Activated CD4-positive, alpha-beta T cell treated with anti-CD3 and anti-CD28 coated beads for 36 hours (primary cell): ENCODE measurements at regions of chr9 and their contacts with region 1.

Region 1: DNA sequence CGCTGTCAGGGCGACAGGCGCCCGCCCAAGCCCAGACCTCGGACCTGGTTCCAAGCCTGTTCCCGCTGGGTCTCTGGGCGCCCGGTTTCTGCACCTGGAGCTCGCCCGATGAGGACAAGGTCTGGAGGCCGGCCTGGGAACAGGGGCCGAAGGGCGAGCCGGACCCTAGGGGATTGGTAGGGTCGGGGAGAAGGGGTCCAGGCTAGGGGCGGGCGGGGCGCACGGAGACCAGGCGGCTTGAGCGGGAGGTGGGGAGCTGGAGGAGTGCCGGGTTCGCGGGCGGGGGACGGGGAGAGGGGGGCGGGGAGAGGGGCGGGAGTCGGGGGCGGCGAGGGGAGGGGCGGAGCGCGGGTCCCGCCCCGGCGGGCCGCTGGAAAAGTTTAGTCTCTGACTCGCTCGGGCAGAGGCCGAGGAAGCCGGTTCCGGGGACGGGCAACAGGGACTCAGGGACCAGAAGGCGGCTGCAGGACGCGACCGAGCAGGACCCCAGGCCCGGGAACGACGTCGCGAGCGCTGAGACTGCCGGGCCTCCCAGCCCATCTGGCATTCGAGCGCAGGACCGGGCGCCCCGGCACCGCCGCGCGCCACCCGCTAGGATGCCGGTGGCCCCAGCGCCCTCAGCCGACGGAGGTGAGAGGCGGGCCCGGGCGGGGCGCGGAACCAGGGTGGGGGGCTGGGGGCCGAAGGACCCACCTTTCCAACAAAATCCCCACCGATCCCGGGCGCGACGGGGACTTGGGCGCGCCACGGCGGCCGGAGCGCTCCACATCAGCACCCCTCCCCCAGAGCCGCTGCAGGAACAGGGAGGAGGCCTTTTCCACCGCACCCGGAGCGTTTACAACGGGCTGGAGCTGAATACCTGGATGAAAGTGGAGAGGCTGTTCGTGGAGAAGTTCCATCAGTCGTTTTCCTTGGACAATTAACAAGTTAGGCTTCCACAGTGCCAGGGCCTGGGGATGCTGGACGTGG is at the start of gene S1PR3:
- DNase-seq: peak; percentile 69
- ATAC-seq: peak; percentile 27
- H3K4me3 Mint-ChIP-seq: peak within 1 kb of the TSS; percentile 66
- H3K27ac Mint-ChIP-seq: no peak within 1 kb of the TSS
- H3K4me1 Mint-ChIP-seq: peaks cover 31% of the 10 kb centered on the region
- H3K27me3 Mint-ChIP-seq: peaks cover 42% of the 10 kb centered on the region
- total RNA-seq, gene S1PR3: 0.56 to 1.2 TPM

Region 2: DNA sequence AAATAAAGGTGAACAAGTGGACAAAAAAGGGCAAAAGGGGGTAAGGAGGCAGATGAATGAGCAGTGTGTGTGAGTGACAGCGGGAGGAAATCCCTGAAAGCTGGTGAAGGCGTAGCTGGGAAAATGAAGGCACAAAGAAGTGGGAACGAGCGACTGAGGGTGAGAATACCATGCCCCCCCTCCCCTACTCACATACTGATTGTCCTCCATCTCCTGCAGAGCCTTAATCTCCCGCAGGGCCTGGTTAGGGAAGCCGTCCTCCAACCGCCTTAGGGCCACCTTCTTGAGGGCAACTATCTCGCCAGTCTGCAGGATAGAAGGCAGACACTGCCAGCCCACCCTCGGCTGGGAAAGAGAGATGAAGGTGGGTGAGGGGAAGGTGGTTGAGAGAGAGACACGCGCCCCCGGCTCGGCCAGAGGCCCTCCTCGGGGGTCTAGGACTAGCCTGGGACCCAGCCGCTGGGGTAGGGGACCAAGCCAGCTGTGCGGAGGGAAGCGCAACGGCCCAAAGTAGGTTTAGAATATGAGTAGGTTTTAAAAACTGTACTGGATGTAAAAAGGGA is 1017.5 kb before region 1 on chr9:
- CTCF ChIA-PET with region 1: no interaction called
- POLR2A ChIA-PET with region 1: no interaction called
- intact Hi-C with region 1: loop called in 1 of 2 experiments (anchors 10 kb)
- DNase-seq: peak; percentile 19
- ATAC-seq: no peak
- H3K4me3 Mint-ChIP-seq: peak overlapping the region; percentile 82
- H3K27ac Mint-ChIP-seq: peak overlapping the region; percentile 58
- H3K4me1 Mint-ChIP-seq: peaks cover 22% of the 10 kb centered on the region
- H3K27me3 Mint-ChIP-seq: no peaks in the 10 kb centered on the region

Region 3: GRCh38 chr9:88835038-88835466 is 156.3 kb before region 1 on chr9:
- CTCF ChIA-PET with region 1: no interaction called
- POLR2A ChIA-PET with region 1: no interaction called
- intact Hi-C with region 1: loop called (anchors 2 kb)
- DNase-seq: no peak
- ATAC-seq: peak; percentile 93
- H3K4me3 Mint-ChIP-seq: no peak overlapping the region
- H3K27ac Mint-ChIP-seq: no peak overlapping the region
- H3K4me1 Mint-ChIP-seq: peaks cover 21% of the 10 kb centered on the region
- H3K27me3 Mint-ChIP-seq: peaks cover 63% of the 10 kb centered on the region

Region 4: GRCh38 chr9:88950341-88951141 is 40.8 kb before region 1 on chr9:
- CTCF ChIA-PET with region 1: no interaction called
- POLR2A ChIA-PET with region 1: no interaction called
- intact Hi-C with region 1: loop called in 1 of 2 experiments (anchors 2 kb)
- DNase-seq: no peak
- ATAC-seq: no peak
- H3K4me3 Mint-ChIP-seq: no peak overlapping the region
- H3K27ac Mint-ChIP-seq: no peak overlapping the region
- H3K4me1 Mint-ChIP-seq: peaks cover 12% of the 10 kb centered on the region
- H3K27me3 Mint-ChIP-seq: peaks cover 26% of the 10 kb centered on the region